A673 (cell line): ENCODE measurements at regions of chr2 and their contacts with region 1.

Region 1: GRCh38 chr2:225797394-225797793 is 397.9 kb downstream of the NYAP2 start:
- DNase-seq: no peak
- H3K4me3 ChIP-seq: no peak overlapping the region
- H3K27ac ChIP-seq: peak overlapping the region; percentile 31
- H3K4me1 ChIP-seq: peaks cover 38% of the 10 kb centered on the region
- H3K27me3 ChIP-seq: no peaks in the 10 kb centered on the region
- CTCF ChIP-seq: no peak

Region 2: GRCh38 chr2:225737556-225737955 is 59.8 kb before region 1 on chr2:
- CTCF ChIA-PET with region 1: no interaction called
- POLR2A ChIA-PET with region 1: no interaction called
- intact Hi-C with region 1: loop called (anchors 1 kb)
- DNase-seq: peak; percentile 79
- H3K4me3 ChIP-seq: no peak overlapping the region
- H3K27ac ChIP-seq: peak overlapping the region; percentile 61
- H3K4me1 ChIP-seq: peaks cover 29% of the 10 kb centered on the region
- H3K27me3 ChIP-seq: no peaks in the 10 kb centered on the region
- CTCF ChIP-seq: no peak

Region 3: GRCh38 chr2:225932811-225933413 is 135.5 kb after region 1 on chr2:
- CTCF ChIA-PET with region 1: no interaction called
- POLR2A ChIA-PET with region 1: no interaction called
- intact Hi-C with region 1: no loop called
- DNase-seq: no peak
- H3K4me3 ChIP-seq: no peak overlapping the region
- H3K27ac ChIP-seq: no peak overlapping the region
- H3K4me1 ChIP-seq: no peaks in the 10 kb centered on the region
- H3K27me3 ChIP-seq: no peaks in the 10 kb centered on the region
- CTCF ChIP-seq: no peak

Region 4: DNA sequence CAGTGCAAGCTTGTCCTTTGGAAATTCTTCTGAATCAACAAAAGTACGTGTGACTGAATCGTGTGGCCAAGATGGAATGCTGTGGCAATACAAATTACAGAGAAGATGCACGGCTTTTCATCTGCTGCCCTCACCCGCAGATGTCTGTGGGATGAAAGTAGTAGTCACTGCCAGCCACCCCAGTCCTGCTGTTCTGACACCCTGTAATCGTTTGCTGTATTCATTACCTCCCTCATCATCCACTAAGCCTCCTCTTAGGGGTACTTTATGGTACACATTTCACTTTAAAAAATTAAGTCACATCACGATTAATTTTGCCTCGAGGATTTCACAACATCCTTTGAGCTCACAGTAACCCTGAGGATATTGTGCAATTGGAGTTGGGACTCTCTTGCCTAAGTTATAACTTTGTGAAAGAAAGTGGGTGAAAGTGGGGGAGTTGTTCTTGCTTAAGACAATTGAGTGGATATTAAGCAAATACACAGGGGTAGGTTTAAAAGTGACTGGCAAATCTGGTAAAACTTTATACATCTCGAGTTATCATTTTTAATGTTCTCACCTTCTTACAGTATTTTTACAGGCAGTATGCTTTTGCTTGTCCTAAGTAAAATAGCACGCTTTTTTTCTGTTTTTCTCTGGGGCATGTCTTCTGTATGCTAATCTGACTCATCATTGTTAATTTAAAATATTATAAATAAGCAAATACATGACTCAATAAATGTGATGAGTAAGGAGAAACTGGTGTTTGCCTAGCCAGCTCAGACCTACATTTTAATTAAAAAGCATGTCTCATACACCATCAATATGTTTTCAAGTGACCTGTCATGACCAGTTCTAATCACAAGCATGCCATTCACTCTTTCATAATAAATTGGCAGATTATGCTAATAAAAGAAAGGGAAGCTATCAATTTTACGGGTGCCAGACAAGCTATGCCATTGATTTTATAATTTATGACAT is 321.4 kb after region 1 on chr2:
- CTCF ChIA-PET with region 1: no interaction called
- POLR2A ChIA-PET with region 1: no interaction called
- intact Hi-C with region 1: loop called (anchors 2 kb)
- DNase-seq: peak; percentile 92
- H3K4me3 ChIP-seq: peak overlapping the region; percentile 9
- H3K27ac ChIP-seq: peak overlapping the region; percentile 55
- H3K4me1 ChIP-seq: peaks cover 84% of the 10 kb centered on the region
- H3K27me3 ChIP-seq: no peaks in the 10 kb centered on the region
- CTCF ChIP-seq: no peak

Region 5: GRCh38 chr2:226185616-226186211 is 388.3 kb after region 1 on chr2:
- CTCF ChIA-PET with region 1: no interaction called
- POLR2A ChIA-PET with region 1: no interaction called
- intact Hi-C with region 1: loop called (anchors 1 kb)
- DNase-seq: peak; percentile 87
- H3K4me3 ChIP-seq: peak overlapping the region; percentile 6
- H3K27ac ChIP-seq: peak overlapping the region; percentile 84
- H3K4me1 ChIP-seq: peaks cover 40% of the 10 kb centered on the region
- H3K27me3 ChIP-seq: no peaks in the 10 kb centered on the region
- CTCF ChIP-seq: no peak

Region 6: GRCh38 chr2:226649871-226650660 is 852.7 kb after region 1 on chr2:
- CTCF ChIA-PET with region 1: no interaction called
- POLR2A ChIA-PET with region 1: no interaction called
- intact Hi-C with region 1: loop called (anchors 10 kb)
- DNase-seq: peak; percentile 99
- H3K4me3 ChIP-seq: peak overlapping the region; percentile 1
- H3K27ac ChIP-seq: peak overlapping the region; percentile 79
- H3K4me1 ChIP-seq: peaks cover 45% of the 10 kb centered on the region
- H3K27me3 ChIP-seq: no peaks in the 10 kb centered on the region
- CTCF ChIP-seq: no peak

Region 7: DNA sequence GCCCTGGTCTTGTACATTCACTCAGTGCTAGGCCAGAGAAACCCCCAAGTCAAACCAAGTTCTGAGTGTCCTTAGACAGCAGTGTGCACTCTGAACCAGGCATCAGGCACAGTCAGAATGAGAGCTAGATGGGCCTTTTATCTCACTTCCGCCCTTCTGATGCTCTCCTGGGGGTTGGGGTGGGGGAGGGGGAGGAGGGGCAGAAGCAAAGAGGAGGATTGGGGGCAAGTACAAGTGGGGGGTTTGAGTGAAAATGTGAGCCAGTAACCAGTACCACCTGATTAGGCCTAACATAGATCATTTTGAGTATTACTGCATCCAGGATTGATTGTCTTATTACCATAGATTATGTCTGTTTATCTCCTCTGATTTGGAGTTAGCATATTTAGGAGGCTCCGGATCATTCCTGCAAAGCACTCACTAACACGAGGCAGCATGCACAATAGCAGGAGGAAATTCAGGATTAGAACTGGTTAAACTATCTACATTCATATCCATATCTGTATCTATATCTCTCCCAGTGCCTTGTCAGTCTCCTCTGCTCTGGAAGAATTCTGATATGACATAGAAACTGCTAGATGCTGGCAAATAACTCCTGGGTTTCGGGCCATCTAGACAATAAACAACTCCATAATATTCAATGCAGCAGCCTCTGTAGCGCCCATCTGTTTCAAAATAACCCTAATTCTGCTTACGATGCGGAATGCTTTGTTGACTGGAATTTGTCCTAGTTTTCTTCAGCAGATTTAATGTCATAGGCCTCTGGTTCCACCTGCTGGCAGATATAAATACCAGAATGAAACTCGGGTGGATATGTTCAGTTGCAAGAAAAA is 1187.6 kb after region 1 on chr2:
- CTCF ChIA-PET with region 1: no interaction called
- POLR2A ChIA-PET with region 1: no interaction called
- intact Hi-C with region 1: loop called (anchors 2 kb)
- DNase-seq: peak; percentile 88
- H3K4me3 ChIP-seq: no peak overlapping the region
- H3K27ac ChIP-seq: peak overlapping the region; percentile 52
- H3K4me1 ChIP-seq: peaks cover 14% of the 10 kb centered on the region
- H3K27me3 ChIP-seq: no peaks in the 10 kb centered on the region
- CTCF ChIP-seq: peak; percentile 77